Endothelial cell of umbilical vein (primary cell): ENCODE measurements at regions of chr18 and their contacts with region 1.

Region 1: DNA sequence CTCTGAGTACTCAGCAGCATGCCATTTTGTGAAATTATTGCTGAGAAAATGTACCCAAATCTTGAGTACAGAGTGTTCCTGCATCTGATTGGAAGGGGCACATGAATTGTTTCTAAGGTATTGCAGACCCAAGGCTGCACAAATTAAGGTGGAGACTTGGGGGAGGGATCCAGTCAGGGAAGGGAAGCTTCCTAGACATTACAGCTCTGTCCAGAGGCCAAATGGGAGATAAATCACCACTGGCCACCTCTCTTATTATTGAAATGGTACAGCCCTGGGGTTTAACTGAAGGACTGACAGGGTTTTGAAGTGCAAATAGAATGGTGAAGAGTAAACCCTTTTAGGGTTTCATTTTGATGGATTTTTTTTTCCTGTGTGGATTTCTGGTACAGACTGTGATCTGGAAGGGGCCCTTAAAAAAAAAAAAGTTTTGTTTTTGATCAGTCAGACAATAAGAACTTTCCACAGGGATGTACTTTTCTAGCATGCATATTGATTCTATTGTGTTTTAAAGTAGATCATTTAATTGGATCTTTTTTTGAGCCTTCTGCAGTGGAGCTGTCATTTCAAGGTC is 119.4 kb downstream of the GREB1L start:
- DNase-seq: no peak
- H3K4me3 ChIP-seq: no peak overlapping the region
- H3K27ac ChIP-seq: no peak overlapping the region
- H3K4me1 ChIP-seq: no peaks in the 10 kb centered on the region
- H3K27me3 ChIP-seq: peaks cover 3 to 4% of the 10 kb centered on the region in 2 experiments
- CTCF ChIP-seq: no peak
- POLR2A ChIP-seq: no peak

Region 2: GRCh38 chr18:21085579-21086166 is 275.7 kb before region 1 on chr18:
- CTCF ChIA-PET with region 1: no interaction called
- POLR2A ChIA-PET with region 1: no interaction called
- dilution Hi-C with region 1: no loop called
- intact Hi-C with region 1: no loop called
- DNase-seq: no peak
- H3K4me3 ChIP-seq: no peak overlapping the region
- H3K27ac ChIP-seq: no peak overlapping the region
- H3K4me1 ChIP-seq: peaks cover 3% of the 10 kb centered on the region
- H3K27me3 ChIP-seq: no peaks in the 10 kb centered on the region
- CTCF ChIP-seq: no peak
- POLR2A ChIP-seq: no peak

Region 3: DNA sequence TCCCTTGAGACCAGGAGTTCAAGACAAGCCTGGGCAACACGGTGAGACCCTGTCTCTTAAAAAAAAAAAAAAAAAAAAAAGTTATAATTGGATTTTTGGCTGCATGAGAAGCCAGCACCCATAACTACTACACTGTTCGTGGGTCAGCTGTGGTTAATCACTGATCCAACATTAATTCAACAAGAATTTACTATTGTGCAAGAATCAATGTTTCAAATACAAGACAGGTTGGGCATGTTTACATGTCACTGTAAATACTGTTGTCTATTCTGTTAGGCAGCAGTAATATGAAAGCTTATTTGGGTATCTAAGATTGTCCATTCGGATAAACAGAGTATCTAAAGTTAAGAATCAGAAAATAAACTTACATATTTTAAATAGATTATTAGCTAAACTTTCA is 176.8 kb after region 1 on chr18:
- CTCF ChIA-PET with region 1: no interaction called
- POLR2A ChIA-PET with region 1: interaction called, 11 read pairs
- dilution Hi-C with region 1: no loop called
- intact Hi-C with region 1: no loop called
- DNase-seq: no peak
- H3K4me3 ChIP-seq: no peak overlapping the region
- H3K27ac ChIP-seq: no peak overlapping the region
- H3K4me1 ChIP-seq: no peaks in the 10 kb centered on the region
- H3K27me3 ChIP-seq: no peaks in the 10 kb centered on the region
- CTCF ChIP-seq: no peak
- POLR2A ChIP-seq: no peak